SK-N-SH (cell line): ENCODE measurements at regions of chr2 and their contacts with region 1.

Region 1: DNA sequence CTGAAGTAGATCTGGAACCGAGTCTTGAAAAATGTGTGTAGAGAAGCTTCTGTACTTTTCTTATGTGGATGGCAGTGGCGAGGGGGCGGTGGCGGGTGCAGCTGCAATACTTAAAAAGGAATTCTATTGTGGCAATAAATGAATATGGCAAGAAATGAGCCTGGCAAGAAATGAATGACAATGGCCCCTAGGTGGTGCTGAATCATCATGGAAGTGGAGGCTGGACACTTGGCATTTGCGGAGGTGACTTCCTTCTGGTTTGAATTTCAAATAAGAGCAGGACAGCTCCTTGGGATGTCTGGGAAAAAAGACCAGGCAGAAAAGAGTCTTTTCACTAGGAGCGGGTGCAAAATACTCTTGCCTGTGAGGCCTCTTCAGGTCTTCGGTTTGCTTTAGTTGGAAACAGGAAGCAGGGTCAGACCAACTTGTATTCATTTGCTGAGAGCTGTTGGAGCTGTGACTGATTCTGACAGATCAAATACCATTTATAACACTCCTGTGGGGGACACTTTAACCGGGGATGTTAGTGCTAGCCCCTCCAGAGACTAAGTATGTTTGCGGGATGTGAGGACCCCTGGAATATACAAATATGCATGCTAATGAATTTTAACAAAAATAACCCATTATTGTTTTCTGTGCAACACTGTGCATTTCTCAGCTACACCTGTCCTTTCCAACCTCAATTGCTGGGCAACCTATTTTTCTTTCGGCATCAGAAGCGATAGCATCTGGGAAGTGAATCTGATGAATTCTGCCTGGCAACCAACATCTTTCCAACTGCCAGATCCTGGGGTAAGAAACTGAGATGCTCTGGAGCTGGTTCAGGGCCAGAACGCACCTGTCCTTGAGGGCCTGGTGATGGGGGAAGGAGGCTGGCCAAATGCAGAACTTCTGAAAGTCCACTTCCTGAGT is 35.4 kb downstream of the FASTKD2 start:
- DNase-seq: peak; percentile 52
- H3K4me3 ChIP-seq: no peak overlapping the region; a peak in 1 of 4 replicates
- H3K27ac ChIP-seq: peak overlapping the region in 1 of 2 experiments; percentile 28; a peak in 1 of 4 replicates
- H3K4me1 ChIP-seq: peaks cover 0 to 27% of the 10 kb centered on the region in 2 experiments; a peak in 1 of 4 replicates
- H3K27me3 ChIP-seq: no peaks in the 10 kb centered on the region
- CTCF ChIP-seq: peak; percentile 78
- EP300 ChIP-seq: no peak
- RAD21 ChIP-seq: peak; percentile 95

Region 2: DNA sequence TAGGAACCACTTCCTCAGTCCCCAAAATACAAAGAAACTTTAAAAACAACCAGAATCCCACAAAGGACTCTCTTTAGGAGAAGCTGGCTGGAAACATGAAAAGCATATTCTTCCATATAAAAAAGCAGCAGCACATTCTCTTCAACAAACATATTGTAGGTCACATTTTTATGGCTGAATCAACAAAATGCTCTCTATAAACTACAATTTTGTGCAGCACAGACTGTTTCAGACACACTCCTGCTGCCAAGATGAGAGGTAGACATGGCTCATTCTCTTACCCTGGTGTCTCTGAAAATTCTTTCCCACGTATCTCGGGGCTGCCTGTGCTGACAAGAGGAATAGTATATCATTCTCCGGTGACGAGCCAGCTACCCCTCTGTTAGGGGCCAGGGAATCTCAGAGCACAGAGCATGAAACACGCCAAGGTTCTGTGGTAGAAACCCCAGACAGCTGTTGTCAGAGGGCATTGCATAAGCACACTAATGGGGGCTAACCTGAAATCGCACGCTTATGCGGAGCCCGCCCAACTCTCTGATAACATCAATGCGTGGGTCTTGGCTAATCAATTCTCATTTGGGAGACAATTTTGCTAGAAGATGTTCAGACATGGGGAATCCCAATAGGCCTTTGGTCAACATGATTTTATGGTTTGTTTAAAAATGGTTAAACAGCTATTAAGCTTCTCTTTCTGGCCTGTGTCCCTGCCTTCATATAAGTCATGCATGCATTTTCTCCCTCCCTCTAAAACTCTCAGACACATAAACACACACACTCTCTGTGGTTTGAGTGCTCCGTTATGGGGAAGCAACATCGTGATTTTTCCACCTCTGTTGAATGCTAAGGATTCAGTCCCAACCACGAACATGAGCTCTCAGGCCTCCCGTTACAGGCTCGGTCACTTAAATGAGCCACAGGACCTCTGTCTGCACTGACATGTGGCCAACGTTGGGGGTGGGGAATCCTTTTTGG is 892.3 kb before region 1 on chr2:
- CTCF ChIA-PET with region 1: no interaction called
- POLR2A ChIA-PET with region 1: no interaction called
- DNase-seq: no peak
- H3K4me3 ChIP-seq: no peak overlapping the region
- H3K27ac ChIP-seq: no peak overlapping the region
- H3K4me1 ChIP-seq: no peaks in the 10 kb centered on the region; a peak in 1 of 4 replicates
- H3K27me3 ChIP-seq: peaks cover 8% of the 10 kb centered on the region; the same call in 1 of the 2 replicates
- CTCF ChIP-seq: no peak
- EP300 ChIP-seq: no peak
- RAD21 ChIP-seq: no peak

Region 3: GRCh38 chr2:206783718-206784117 is 17.0 kb before region 1 on chr2:
- CTCF ChIA-PET with region 1: interaction called, 98 read pairs
- POLR2A ChIA-PET with region 1: interaction called, 3 read pairs
- DNase-seq: peak; percentile 19
- H3K4me3 ChIP-seq: no peak overlapping the region
- H3K27ac ChIP-seq: no peak overlapping the region; a peak in 1 of 4 replicates
- H3K4me1 ChIP-seq: peaks cover 0 to 8% of the 10 kb centered on the region in 2 experiments; a peak in 2 of 4 replicates
- H3K27me3 ChIP-seq: no peaks in the 10 kb centered on the region
- CTCF ChIP-seq: peak; percentile 62
- EP300 ChIP-seq: no peak
- RAD21 ChIP-seq: no peak; the same call in 1 of the 2 replicates

Region 4: GRCh38 chr2:206790311-206790935 is 10.3 kb before region 1 on chr2:
- CTCF ChIA-PET with region 1: interaction called, 98 read pairs
- POLR2A ChIA-PET with region 1: no interaction called
- DNase-seq: no peak
- H3K4me3 ChIP-seq: no peak overlapping the region
- H3K27ac ChIP-seq: no peak overlapping the region
- H3K4me1 ChIP-seq: peaks cover 0 to 3% of the 10 kb centered on the region in 2 experiments; a peak in 1 of 4 replicates
- H3K27me3 ChIP-seq: no peaks in the 10 kb centered on the region
- CTCF ChIP-seq: no peak
- EP300 ChIP-seq: no peak
- RAD21 ChIP-seq: no peak

Region 5: GRCh38 chr2:206981739-206982340 is 181.1 kb after region 1 on chr2:
- CTCF ChIA-PET with region 1: interaction called, 89 read pairs
- POLR2A ChIA-PET with region 1: interaction called, 4 read pairs
- DNase-seq: peak; percentile 68
- H3K4me3 ChIP-seq: no peak overlapping the region; a peak in 1 of 4 replicates
- H3K27ac ChIP-seq: peak overlapping the region in 1 of 2 experiments; percentile 91; a peak in 2 of 4 replicates
- H3K4me1 ChIP-seq: peaks cover 4 to 37% of the 10 kb centered on the region in 2 experiments; a peak in 3 of 4 replicates
- H3K27me3 ChIP-seq: no peaks in the 10 kb centered on the region
- CTCF ChIP-seq: peak; percentile 95
- EP300 ChIP-seq: peak in 1 of 2 experiments; percentile 53; a peak in 1 of 4 replicates
- RAD21 ChIP-seq: peak; percentile 99

Region 6: GRCh38 chr2:206989306-206989705 is 188.5 kb after region 1 on chr2:
- CTCF ChIA-PET with region 1: interaction called, 89 read pairs
- POLR2A ChIA-PET with region 1: no interaction called
- DNase-seq: peak; percentile 37
- H3K4me3 ChIP-seq: no peak overlapping the region
- H3K27ac ChIP-seq: peak overlapping the region in 1 of 2 experiments; percentile 92; a peak in 2 of 4 replicates
- H3K4me1 ChIP-seq: peaks cover 0 to 17% of the 10 kb centered on the region in 2 experiments; a peak in 2 of 4 replicates
- H3K27me3 ChIP-seq: no peaks in the 10 kb centered on the region
- CTCF ChIP-seq: peak; percentile 59
- EP300 ChIP-seq: no peak
- RAD21 ChIP-seq: peak; percentile 48

Region 7: GRCh38 chr2:207437524-207438143 is 636.9 kb after region 1 on chr2:
- CTCF ChIA-PET with region 1: interaction called, 11 read pairs
- POLR2A ChIA-PET with region 1: no interaction called
- DNase-seq: peak; percentile 47
- H3K4me3 ChIP-seq: no peak overlapping the region
- H3K27ac ChIP-seq: peak overlapping the region in 1 of 2 experiments; percentile 90; a peak in 2 of 4 replicates
- H3K4me1 ChIP-seq: peaks cover 0 to 26% of the 10 kb centered on the region in 2 experiments; a peak in 2 of 4 replicates
- H3K27me3 ChIP-seq: no peaks in the 10 kb centered on the region
- CTCF ChIP-seq: no peak
- EP300 ChIP-seq: peak in 1 of 2 experiments; percentile 24; a peak in 1 of 4 replicates
- RAD21 ChIP-seq: peak; percentile 1; the same call in 1 of the 2 replicates

Region 8: DNA sequence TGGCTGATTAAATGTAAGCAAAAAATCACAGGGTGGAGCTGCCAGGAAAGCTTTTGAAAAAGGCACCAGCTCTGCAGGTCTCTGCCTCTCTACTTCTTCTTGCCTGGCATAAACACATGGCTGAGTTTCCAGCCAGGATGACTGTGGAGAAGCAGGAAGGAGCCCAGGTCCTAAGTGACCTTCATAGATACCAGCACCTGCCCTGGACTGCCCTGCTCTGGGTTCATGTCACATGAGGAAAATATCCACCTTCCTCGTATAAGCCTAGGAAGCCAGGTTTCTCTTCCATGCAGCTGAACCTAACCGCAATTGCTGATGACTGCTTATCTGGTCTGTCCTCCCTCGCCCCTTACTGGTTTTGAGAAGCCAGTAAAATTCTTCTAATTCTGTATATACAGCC is 681.2 kb after region 1 on chr2:
- CTCF ChIA-PET with region 1: interaction called, 30 read pairs
- POLR2A ChIA-PET with region 1: no interaction called
- DNase-seq: no peak
- H3K4me3 ChIP-seq: no peak overlapping the region
- H3K27ac ChIP-seq: no peak overlapping the region
- H3K4me1 ChIP-seq: peaks cover 0 to 3% of the 10 kb centered on the region in 2 experiments; a peak in 1 of 4 replicates
- H3K27me3 ChIP-seq: no peaks in the 10 kb centered on the region
- CTCF ChIP-seq: no peak
- EP300 ChIP-seq: no peak
- RAD21 ChIP-seq: no peak